ENCODE measurements at regions of chr12 and their contacts with region 1.

Region 1: GRCh38 chr12:48350249-48351021 is at the start of gene ZNF641:
- DNase-seq: peak; percentile 79
- H3K4me3 Mint-ChIP-seq: peak within 1 kb of the TSS; percentile 96
- H3K27ac Mint-ChIP-seq: peak within 1 kb of the TSS; percentile 67
- H3K4me1 Mint-ChIP-seq: peaks cover 21% of the 10 kb centered on the region
- H3K27me3 Mint-ChIP-seq: peaks cover 5% of the 10 kb centered on the region
- total RNA-seq, gene ZNF641: 5.4 and 6.4 TPM in 2 replicates

Region 2: DNA sequence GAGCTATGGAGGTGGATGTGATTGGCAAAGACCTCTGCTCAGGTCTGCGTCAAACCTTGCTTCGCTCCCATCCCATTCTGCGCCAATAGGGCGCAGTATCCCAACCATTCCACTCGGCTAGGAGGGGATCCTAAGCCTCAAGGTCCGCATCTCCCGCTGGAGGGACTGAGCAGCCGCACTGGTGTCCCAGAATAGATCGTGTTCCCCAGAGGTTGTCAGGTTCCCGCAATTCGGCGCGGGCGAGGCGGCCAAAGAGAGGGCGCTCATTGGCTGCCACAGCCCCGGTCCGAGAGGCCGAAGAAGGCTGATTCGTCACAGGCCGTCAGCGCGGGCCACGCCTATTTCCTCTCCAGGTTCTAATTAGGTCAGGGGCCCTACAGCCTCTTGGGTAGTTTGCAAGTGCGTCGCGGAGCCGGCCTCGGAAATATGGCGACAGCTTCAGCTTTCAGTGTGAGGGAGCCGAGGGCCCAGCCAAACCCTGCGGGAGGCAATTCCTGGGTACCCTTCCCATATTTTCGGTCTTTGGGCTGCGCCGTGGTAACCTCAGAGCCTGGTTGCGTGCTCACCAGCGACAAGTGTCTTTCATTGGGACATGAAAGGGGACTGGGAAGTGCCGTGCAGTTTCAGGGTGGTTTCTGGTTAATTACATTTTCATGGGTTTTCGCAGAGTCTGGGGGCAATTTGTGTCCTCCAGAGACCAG is 152.3 kb before region 1 on chr12:
- intact Hi-C with region 1: loop called (anchors 2 kb)
- DNase-seq: peak; percentile 90
- H3K4me3 Mint-ChIP-seq: peak overlapping the region; percentile 81
- H3K27ac Mint-ChIP-seq: peak overlapping the region; percentile 96
- H3K4me1 Mint-ChIP-seq: peaks cover 20% of the 10 kb centered on the region
- H3K27me3 Mint-ChIP-seq: peaks cover 21% of the 10 kb centered on the region

Region 3: GRCh38 chr12:48311313-48311712 is 39.1 kb before region 1 on chr12:
- intact Hi-C with region 1: no loop called
- DNase-seq: no peak
- H3K4me3 Mint-ChIP-seq: no peak overlapping the region
- H3K27ac Mint-ChIP-seq: no peak overlapping the region
- H3K4me1 Mint-ChIP-seq: no peaks in the 10 kb centered on the region
- H3K27me3 Mint-ChIP-seq: peaks cover 6% of the 10 kb centered on the region

Measured in activated T-helper 2 cell treated with anti-CD3 and anti-CD28 coated beads, Interferon-gamma antibody, Interleukin-2, Interleukin-4, amounts not matched to agents 10 μg/mL and 5 μg/mL and 100 μg/mL, durations not matched to agents 14 hours and 24 hours and 36 hours (primary cell).